ENCODE measurements at regions of chr12 and their contacts with region 1.

Region 1: GRCh38 chr12:31644536-31644935 is 15.0 kb upstream of the ETFBKMT start:
- DNase-seq: no peak
- H3K4me3 ChIP-seq: no peak overlapping the region
- H3K27ac ChIP-seq: no peak overlapping the region
- H3K4me1 ChIP-seq: no peaks in the 10 kb centered on the region
- H3K27me3 ChIP-seq: no peaks in the 10 kb centered on the region
- CTCF ChIP-seq: no peak

Region 2: DNA sequence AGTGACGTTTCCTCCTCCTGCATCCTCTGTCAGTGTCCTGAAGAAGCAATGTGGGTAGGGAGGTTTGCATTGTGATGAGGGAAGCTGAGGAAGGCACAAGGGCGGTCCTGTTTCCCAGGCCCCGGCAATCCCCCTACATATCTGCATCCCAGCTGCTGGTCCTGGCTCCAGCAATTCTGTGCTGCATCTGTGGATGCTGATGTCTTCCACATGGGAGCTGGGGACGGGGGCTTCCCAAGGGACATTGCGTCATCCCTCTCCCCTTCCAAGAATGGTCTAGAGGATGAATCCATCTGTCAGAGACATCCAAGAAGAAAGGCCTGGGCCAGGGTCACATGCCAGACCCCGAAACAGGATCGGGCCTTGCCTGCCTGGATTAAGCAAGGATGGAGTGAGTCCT is 665.9 kb before region 1 on chr12:
- CTCF ChIA-PET with region 1: no interaction called
- POLR2A ChIA-PET with region 1: interaction called, 11 read pairs
- intact Hi-C with region 1: no loop called
- DNase-seq: no peak
- H3K4me3 ChIP-seq: no peak overlapping the region
- H3K27ac ChIP-seq: no peak overlapping the region
- H3K4me1 ChIP-seq: peaks cover 14% of the 10 kb centered on the region; the same call in 1 of the 2 replicates
- H3K27me3 ChIP-seq: no peaks in the 10 kb centered on the region
- CTCF ChIP-seq: no peak